ENCODE measurements at regions of chr1 and their contacts with region 1.

Region 1: GRCh38 chr1:77533660-77534305 is 148.7 kb downstream of the ZZZ3 start:
- DNase-seq: no peak
- ATAC-seq: no peak
- H3K4me3 Mint-ChIP-seq: no peak overlapping the region
- H3K27ac Mint-ChIP-seq: no peak overlapping the region
- H3K4me1 Mint-ChIP-seq: peaks cover 4% of the 10 kb centered on the region
- H3K27me3 Mint-ChIP-seq: peaks cover 4% of the 10 kb centered on the region
- CTCF ChIP-seq: no peak

Region 2: GRCh38 chr1:76330991-76331603 is 1202.7 kb before region 1 on chr1:
- CTCF ChIA-PET with region 1: no interaction called
- POLR2A ChIA-PET with region 1: no interaction called
- intact Hi-C with region 1: loop called (anchors 10 kb)
- DNase-seq: no peak
- ATAC-seq: no peak
- H3K4me3 Mint-ChIP-seq: no peak overlapping the region
- H3K27ac Mint-ChIP-seq: no peak overlapping the region
- H3K4me1 Mint-ChIP-seq: peaks cover 3% of the 10 kb centered on the region
- H3K27me3 Mint-ChIP-seq: peaks cover 2% of the 10 kb centered on the region
- CTCF ChIP-seq: peak; percentile 95

Region 3: DNA sequence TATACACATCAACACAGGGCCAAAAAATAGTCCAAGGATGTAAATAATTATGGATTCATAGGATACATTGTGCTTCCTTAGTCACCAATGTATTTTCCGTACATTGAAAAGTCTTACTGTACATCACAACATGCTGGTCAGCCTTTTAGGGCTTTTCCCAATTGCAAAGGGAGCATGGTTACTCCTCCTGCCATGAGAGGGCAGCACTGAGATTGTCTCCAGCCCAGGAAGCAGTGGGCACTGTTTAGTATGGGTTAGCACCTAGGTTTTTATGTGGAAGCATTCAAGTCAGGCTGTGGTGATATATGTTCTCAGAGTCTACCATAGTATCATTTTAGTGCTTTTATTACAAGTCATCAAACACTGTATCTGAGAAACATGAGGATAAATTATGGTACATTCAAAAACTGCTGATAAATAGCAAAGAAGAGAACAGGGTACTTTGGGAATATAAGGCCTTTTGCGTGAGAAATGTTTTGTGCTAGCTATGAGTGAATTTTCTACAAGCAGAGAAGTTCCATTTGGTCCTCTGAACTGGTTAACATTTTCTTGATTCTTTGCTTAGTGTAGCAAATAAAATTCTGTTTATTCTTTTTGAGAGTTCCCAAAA is 632.5 kb before region 1 on chr1:
- CTCF ChIA-PET with region 1: no interaction called
- POLR2A ChIA-PET with region 1: no interaction called
- intact Hi-C with region 1: loop called (anchors 10 kb)
- DNase-seq: no peak
- ATAC-seq: no peak
- H3K4me3 Mint-ChIP-seq: no peak overlapping the region
- H3K27ac Mint-ChIP-seq: no peak overlapping the region
- H3K4me1 Mint-ChIP-seq: no peaks in the 10 kb centered on the region
- H3K27me3 Mint-ChIP-seq: peaks cover 2% of the 10 kb centered on the region
- CTCF ChIP-seq: no peak

Region 4: DNA sequence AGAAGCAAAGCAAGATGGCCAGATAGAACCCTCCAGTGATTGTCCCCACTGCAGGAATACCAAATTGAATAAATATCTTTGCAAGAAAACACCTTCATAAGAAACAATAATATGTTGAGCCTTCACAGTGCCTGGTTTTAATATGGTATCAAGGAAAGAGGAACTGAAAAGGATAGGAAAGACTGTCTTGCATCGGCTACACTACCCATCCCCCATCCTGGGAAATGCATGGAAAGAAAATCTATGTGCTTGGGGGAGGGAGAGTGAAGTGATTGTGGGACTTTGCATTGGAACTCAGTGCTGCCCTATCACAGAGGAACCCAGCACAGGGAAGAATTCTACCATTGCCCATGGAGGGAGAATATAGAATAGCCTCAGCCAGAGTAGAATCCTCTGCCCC is 280.6 kb before region 1 on chr1:
- CTCF ChIA-PET with region 1: no interaction called
- POLR2A ChIA-PET with region 1: no interaction called
- intact Hi-C with region 1: no loop called
- DNase-seq: no peak
- ATAC-seq: no peak
- H3K4me3 Mint-ChIP-seq: no peak overlapping the region
- H3K27ac Mint-ChIP-seq: no peak overlapping the region
- H3K4me1 Mint-ChIP-seq: no peaks in the 10 kb centered on the region
- H3K27me3 Mint-ChIP-seq: no peaks in the 10 kb centered on the region
- CTCF ChIP-seq: no peak

Measured in activated B cell treated with CpG ODN at 0.5 μM for 24 hours (primary cell).